ENCODE measurements at regions of chr17 and their contacts with region 1.

Region 1: DNA sequence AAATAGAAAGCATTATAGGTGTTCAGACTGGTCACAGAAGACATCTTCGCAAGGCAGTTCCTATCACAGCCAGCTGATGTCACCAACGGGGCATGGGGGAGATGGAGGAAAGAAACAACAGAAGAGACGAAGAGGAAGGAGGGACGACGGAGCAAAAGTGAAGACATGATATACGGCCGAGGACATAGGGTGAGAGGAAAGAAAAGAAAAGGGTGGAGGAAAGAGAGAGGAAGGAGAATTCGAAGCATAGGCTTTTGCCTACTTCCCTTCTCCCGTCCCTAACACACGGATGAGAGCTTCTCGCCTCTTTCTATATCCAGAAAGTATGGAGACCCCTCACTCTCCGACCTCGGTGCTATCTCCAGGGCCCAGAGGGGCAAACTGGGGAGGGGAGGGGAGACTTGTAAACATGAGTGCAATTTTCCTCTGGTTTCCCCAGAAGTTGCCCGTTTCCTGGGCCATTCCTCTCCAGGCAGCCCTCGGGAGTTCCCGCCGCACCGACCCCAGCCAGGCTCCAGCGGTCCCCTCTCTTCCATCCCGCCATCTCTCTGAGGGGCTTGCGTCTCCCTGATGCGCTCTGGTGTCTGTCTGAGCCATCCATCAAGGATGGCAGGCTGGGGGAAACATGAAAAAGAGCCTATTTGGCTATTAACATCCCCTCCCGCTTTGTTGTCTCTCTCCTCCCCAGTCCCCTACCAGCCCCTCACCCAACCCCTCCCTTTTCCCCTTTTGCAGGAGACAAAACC is 26.0 kb downstream of the COPZ2 start:
- DNase-seq: peak; percentile 68
- ATAC-seq: peak; percentile 88
- H3K4me3 Mint-ChIP-seq: peak overlapping the region; percentile 55
- H3K27ac Mint-ChIP-seq: no peak overlapping the region
- H3K4me1 Mint-ChIP-seq: peaks cover 12% of the 10 kb centered on the region
- H3K27me3 Mint-ChIP-seq: peaks cover 48% of the 10 kb centered on the region
- CTCF ChIP-seq: peak; percentile 62

Region 2: DNA sequence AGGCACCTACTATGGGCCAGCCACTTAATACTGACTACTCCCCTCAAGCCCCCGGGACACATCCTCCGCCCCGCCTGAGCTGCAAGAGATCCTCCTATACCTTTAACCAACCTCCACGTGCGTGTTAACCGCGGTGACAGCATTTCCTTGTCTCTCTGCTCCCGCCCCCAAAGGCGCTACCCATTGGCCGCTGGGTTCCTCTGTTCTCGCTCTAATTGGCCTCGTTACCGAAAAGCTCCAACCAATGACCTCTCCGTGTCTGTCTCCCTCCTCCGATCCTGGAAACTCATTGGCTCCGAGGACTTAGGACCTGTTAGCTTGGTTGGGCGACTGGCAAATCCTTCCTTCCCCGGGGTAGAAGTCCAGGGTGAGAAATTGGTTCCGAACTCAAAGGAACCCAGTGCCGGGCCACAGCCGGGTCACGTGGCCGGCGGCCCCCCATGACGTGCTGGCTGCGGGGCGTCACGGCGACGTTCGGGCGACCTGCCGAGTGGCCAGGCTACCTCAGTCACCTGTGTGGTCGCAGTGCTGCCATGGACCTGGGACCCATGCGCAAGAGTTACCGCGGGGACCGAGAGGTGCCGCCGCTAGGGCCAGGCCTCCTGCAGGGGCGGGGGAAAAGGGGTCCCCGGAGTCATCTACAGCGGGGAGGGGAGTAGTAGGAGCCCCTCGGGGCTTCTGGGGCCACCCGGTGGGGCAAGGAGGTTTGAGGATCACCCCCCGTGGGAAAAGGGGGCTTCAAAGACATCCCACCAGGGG is 70.2 kb before region 1 on chr17 and contains the start of gene PNPO:
- CTCF ChIA-PET with region 1: interaction called, 66 read pairs
- POLR2A ChIA-PET with region 1: interaction called, 3 read pairs
- intact Hi-C with region 1: loop called (anchors 10 kb)
- DNase-seq: peak; percentile 100
- ATAC-seq: peak; percentile 98
- H3K4me3 Mint-ChIP-seq: peak within 1 kb of the TSS; percentile 84
- H3K27ac Mint-ChIP-seq: peak within 1 kb of the TSS; percentile 88
- H3K4me1 Mint-ChIP-seq: peaks cover 51% of the 10 kb centered on the region
- H3K27me3 Mint-ChIP-seq: no peaks in the 10 kb centered on the region
- CTCF ChIP-seq: no peak
- total RNA-seq, gene PNPO: 41.0 to 42.7 TPM

Region 3: DNA sequence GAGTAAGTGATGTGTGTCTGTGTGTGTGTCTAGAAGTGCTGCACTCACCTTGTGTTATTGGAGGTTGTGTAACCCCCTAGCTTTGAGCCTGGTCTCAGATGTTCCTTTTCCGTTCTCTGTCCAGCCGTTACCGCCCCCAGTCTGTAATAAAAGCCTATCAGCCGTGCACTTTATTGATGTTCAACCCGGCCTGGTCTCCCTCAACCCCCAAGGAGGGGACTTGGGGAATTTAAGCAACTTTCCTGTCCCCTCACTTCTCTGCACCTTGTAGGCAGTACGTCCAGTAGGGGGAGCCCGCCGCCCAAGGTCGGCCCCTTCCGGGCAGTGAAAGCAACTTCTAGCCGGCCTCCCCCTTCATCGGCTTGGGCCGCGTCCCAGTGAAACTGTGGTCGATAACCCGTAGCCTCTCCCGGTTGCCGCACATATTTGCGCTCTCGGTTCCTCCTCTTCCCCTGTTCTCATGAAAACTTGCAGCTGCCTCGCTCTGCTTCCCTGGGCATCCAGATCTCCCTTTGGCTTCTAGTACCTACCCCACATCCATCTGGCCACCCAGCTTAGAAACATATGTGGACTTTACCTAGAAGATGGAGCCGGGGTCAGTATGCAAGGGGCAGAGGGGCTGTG is 62.3 kb before region 1 on chr17:
- CTCF ChIA-PET with region 1: interaction called, 66 read pairs
- POLR2A ChIA-PET with region 1: interaction called, 3 read pairs
- intact Hi-C with region 1: loop called (anchors 10 kb)
- DNase-seq: peak; percentile 89
- ATAC-seq: peak; percentile 64
- H3K4me3 Mint-ChIP-seq: peak overlapping the region; percentile 47
- H3K27ac Mint-ChIP-seq: peak overlapping the region; percentile 78
- H3K4me1 Mint-ChIP-seq: peaks cover 50% of the 10 kb centered on the region
- H3K27me3 Mint-ChIP-seq: no peaks in the 10 kb centered on the region
- CTCF ChIP-seq: peak; percentile 95

Region 4: DNA sequence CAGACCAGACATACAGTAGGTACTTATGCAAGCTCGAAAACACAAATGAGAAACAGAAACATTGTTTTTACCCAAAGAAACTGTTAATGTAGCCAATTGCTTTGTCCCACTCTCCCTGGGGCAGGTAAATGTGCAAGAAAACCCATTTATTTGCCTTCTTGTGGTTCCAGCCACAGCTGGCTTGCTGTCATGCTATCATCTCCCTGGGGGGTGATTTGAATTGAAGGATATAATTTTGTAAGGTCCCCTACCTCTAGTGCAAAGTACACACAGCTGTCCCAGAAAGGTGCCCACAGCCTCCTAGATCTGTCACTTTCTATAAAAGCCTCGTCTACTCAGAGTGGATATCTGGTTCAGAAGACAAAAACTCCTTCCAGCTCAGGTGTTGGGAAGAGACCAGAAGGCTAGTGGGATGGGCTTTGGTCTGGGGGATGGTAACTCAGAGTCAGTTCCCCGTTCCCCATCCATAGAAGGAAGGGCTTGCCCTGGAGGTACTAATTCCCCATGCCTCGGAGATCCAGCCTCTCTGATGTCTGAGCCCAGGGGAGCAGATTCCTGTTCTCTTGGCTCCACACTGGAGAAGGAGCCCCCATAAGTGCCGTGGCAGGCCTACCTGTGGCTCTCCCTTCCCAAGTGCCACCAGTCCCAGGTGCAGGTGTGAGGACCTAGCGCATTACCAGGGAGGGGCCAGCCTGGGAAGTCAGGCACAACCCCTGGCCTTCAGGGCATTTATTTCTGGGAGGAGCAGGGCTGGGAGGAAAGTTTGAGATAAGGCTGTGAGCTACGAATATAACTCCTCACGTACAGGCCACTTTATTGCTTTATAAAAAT is 51.5 kb before region 1 on chr17:
- CTCF ChIA-PET with region 1: no interaction called
- POLR2A ChIA-PET with region 1: no interaction called
- intact Hi-C with region 1: no loop called
- DNase-seq: no peak
- ATAC-seq: no peak
- H3K4me3 Mint-ChIP-seq: no peak overlapping the region
- H3K27ac Mint-ChIP-seq: no peak overlapping the region
- H3K4me1 Mint-ChIP-seq: no peaks in the 10 kb centered on the region
- H3K27me3 Mint-ChIP-seq: no peaks in the 10 kb centered on the region
- CTCF ChIP-seq: no peak

Region 5: DNA sequence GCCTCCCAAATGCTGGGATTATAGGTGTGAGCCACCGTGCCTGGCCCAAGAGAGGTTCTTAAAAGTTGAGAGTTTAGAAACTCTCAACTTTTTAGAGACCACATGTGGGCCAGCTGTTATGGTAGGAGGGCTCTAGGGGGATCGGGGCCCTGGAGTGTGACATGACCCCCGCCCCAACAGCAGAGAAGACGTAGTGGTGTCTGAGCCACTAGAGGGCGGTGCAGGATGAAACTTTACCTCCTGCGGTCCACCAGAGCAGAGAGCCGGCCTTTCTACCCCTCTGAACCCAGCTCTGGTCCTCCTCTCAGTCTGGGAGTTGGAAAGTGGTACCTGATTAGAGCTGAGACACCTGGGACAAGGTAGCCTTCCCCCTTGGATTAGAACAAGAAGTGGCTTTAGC is 33.3 kb before region 1 on chr17:
- CTCF ChIA-PET with region 1: interaction called, 49 read pairs
- POLR2A ChIA-PET with region 1: interaction called, 5 read pairs
- intact Hi-C with region 1: no loop called
- DNase-seq: peak; percentile 68
- ATAC-seq: peak; percentile 84
- H3K4me3 Mint-ChIP-seq: no peak overlapping the region
- H3K27ac Mint-ChIP-seq: no peak overlapping the region
- H3K4me1 Mint-ChIP-seq: no peaks in the 10 kb centered on the region
- H3K27me3 Mint-ChIP-seq: no peaks in the 10 kb centered on the region
- CTCF ChIP-seq: peak; percentile 61

Region 6: GRCh38 chr17:47999582-47999981 is 12.0 kb before region 1 on chr17:
- CTCF ChIA-PET with region 1: interaction called, 14 read pairs
- POLR2A ChIA-PET with region 1: no interaction called
- intact Hi-C with region 1: no loop called
- DNase-seq: peak; percentile 26
- ATAC-seq: peak; percentile 80
- H3K4me3 Mint-ChIP-seq: no peak overlapping the region
- H3K27ac Mint-ChIP-seq: no peak overlapping the region
- H3K4me1 Mint-ChIP-seq: peaks cover 2% of the 10 kb centered on the region
- H3K27me3 Mint-ChIP-seq: peaks cover 8% of the 10 kb centered on the region
- CTCF ChIP-seq: no peak

Measured in activated CD8-positive, alpha-beta T cell treated with anti-CD3 and anti-CD28 coated beads for 36 hours (primary cell).